ENCODE measurements at regions of chr6 and their contacts with region 1.

Region 1: DNA sequence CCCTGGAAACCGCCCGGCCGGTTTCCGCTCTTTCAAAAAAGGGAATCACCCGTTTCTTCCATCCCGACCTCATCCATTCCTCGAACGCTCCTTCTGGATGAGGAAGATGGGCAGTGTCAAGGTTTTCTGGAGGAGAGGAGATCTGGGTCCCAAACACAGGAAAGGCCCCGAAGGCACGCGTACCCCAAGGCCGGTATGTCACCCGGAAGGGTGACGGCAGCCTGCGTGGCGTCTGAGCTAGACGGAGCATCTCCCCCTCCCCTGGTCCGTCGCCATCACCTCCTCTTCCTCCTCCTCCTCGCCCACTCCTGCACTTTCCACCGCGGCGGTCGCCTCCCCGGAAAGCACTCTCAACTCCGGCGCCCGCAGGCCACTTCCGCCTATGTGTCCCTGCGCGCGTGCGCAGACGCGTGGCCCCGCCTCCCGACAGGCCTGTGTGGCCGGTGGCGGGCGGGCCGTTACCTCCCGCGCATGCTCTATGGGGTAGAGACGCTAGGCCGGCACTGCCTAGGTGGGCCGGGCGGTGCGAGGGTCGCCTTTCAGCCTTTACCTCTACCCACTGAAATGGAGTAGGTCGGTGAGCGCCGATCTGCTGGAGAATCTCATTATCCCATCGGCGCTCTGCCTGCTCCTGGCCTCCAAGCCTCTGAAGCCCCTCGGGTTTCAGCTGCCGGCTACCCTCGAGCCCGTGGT is at the start of gene SLC35B3:
- DNase-seq: peak; percentile 98
- H3K4me3 Mint-ChIP-seq: peak within 1 kb of the TSS; percentile 94
- H3K27ac Mint-ChIP-seq: peak within 1 kb of the TSS; percentile 98
- H3K4me1 Mint-ChIP-seq: peaks cover 39% of the 10 kb centered on the region
- H3K27me3 Mint-ChIP-seq: peaks cover 3% of the 10 kb centered on the region
- total RNA-seq, gene SLC35B3: 6.4 and 6.5 TPM in 2 replicates

Region 2: DNA sequence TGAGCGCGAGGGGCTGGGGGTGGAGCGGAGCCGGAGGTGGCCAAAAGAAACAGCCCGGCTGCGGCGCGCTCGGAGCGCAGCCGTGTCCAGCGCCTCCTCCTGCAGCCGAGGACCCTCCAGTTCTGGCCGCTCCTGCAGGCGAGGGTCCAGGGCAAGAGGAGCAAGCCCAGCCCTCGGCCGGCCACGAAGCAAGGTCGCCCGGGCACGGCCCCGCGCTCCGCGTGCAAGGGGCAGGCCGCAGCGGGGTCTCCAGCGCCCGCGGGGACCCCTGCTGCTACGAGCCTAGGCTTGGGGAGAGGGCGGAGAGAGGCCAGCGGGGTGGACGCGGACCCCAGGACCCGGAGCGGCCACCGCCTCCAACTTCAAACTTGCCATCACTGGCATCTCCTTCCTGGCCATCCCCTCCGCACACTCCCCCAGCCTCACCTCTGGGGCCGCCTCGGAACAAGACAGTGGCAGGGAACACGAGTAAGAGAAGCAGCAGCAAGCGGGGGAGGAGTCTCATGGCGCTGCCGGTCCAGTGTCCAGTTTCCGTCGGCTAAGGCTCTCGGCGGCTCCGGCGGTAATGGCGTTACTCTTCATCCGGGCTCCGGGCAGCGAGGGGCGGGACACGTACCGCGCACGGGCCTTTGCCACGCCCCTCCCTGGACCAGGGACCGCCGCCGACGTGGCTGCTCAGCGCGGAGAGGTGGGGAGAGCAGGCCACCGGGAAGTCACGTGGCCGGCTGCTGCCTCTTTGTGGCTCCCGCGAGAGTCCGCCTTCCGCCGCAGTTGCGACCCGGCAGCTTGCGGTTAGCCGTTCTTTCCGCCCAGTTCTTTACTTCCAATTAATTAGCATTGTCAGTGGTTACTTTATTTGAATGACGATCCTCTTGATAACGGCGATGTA is 1122.4 kb before region 1 on chr6 and contains the start of gene SSR1:
- intact Hi-C with region 1: loop called (anchors 2 kb)
- DNase-seq: peak; percentile 95
- H3K4me3 Mint-ChIP-seq: peak within 1 kb of the TSS; percentile 98
- H3K27ac Mint-ChIP-seq: peak within 1 kb of the TSS; percentile 94
- H3K4me1 Mint-ChIP-seq: peaks cover 35% of the 10 kb centered on the region
- H3K27me3 Mint-ChIP-seq: no peaks in the 10 kb centered on the region
- total RNA-seq, gene SSR1: 160 and 168 TPM in 2 replicates

Region 3: DNA sequence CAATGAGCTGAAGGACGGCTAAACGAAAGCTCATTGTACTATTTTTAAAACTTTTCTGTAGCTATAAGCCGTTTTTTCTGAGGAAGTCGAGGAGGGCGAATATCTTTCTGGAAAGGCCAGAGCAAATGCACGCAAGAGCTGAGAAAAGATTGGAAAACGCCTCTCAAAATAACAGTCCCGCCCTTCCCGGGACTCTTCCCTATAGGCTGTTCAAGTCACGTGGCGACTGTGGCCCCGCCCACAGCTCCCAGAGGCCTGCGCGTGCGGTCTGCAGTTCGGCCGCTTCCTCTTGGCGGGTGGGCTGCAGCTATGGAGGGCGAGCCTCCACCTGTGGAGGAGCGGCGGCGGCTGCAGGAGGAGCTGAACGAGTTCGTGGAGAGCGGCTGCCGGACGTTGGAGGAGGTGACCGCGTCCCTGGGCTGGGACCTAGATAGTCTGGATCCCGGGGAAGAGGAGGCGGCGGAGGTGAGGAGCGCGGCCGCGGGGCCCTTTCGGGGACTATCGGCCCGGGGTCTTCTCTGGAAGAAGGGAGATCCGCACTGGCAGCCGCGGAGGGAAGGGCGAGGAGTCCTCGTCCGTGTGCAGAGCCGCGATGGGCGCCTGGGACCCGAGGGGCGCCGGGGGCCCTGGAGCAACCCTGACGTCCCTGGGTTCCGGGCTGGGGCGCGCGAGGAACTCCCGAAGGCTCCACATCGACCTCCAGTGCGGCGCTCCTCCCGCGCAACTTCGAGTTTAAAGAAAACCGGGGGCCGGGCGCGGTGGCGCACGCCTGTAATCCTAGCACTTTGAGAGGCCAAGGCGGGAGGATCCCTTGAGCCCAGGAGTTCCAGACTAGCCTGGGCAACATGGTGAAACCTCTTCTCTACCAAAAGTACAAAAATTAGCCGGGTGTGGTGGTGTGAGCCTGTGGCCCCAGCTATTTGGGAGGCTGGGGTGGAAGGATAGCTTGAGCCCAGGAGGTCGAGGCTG is 845.1 kb before region 1 on chr6 and contains the start of gene SNRNP48:
- intact Hi-C with region 1: loop called (anchors 5 kb)
- DNase-seq: peak; percentile 88
- H3K4me3 Mint-ChIP-seq: peak within 1 kb of the TSS; percentile 100
- H3K27ac Mint-ChIP-seq: peak within 1 kb of the TSS; percentile 95
- H3K4me1 Mint-ChIP-seq: peaks cover 40% of the 10 kb centered on the region
- H3K27me3 Mint-ChIP-seq: no peaks in the 10 kb centered on the region
- total RNA-seq, gene SNRNP48: 17.7 and 18.0 TPM in 2 replicates

Region 4: GRCh38 chr6:7910654-7911344 is 524.5 kb before region 1 on chr6 and contains the start of gene TXNDC5:
- intact Hi-C with region 1: loop called (anchors 2 kb)
- DNase-seq: peak; percentile 68
- H3K4me3 Mint-ChIP-seq: peak within 1 kb of the TSS; percentile 87
- H3K27ac Mint-ChIP-seq: peak within 1 kb of the TSS; percentile 64
- H3K4me1 Mint-ChIP-seq: peaks cover 20% of the 10 kb centered on the region
- H3K27me3 Mint-ChIP-seq: no peaks in the 10 kb centered on the region
- total RNA-seq, gene TXNDC5: 119 and 121 TPM in 2 replicates

Region 5: GRCh38 chr6:8102122-8102958 is 333.0 kb before region 1 on chr6 and contains the start of gene EEF1E1:
- intact Hi-C with region 1: loop called (anchors 1 kb)
- DNase-seq: peak; percentile 87
- H3K4me3 Mint-ChIP-seq: peak within 1 kb of the TSS; percentile 92
- H3K27ac Mint-ChIP-seq: peak within 1 kb of the TSS; percentile 97
- H3K4me1 Mint-ChIP-seq: peaks cover 34% of the 10 kb centered on the region
- H3K27me3 Mint-ChIP-seq: peaks cover 4% of the 10 kb centered on the region
- total RNA-seq, gene EEF1E1: 92.8 and 99.8 TPM in 2 replicates

Region 6: GRCh38 chr6:8375916-8376315 is 59.4 kb before region 1 on chr6:
- intact Hi-C with region 1: no loop called
- DNase-seq: no peak
- H3K4me3 Mint-ChIP-seq: no peak overlapping the region
- H3K27ac Mint-ChIP-seq: no peak overlapping the region
- H3K4me1 Mint-ChIP-seq: no peaks in the 10 kb centered on the region
- H3K27me3 Mint-ChIP-seq: peaks cover 5% of the 10 kb centered on the region

Measured in activated T-helper 1 cell treated with anti-CD3 and anti-CD28 coated beads, Interleukin-12 subunit alpha, Interleukin-12 subunit beta, Interleukin-2, Interleukin-4 antibody, amounts not matched to agents 30 ng/mL and 10 ng/mL and 1 ng/mL, durations not matched to agents 14 hours and 24 hours and 36 hours (primary cell).